ENCODE measurements at regions of chr11 and their contacts with region 1.

Region 1: GRCh38 chr11:118659314-118659952 is 20.0 kb downstream of the TREH start:
- DNase-seq: peak; percentile 80
- ATAC-seq: peak; percentile 100
- H3K4me3 Mint-ChIP-seq: no peak overlapping the region
- H3K27ac Mint-ChIP-seq: no peak overlapping the region
- H3K4me1 Mint-ChIP-seq: peaks cover 7% of the 10 kb centered on the region
- H3K27me3 Mint-ChIP-seq: peaks cover 6% of the 10 kb centered on the region
- CTCF ChIP-seq: peak; percentile 50

Region 2: DNA sequence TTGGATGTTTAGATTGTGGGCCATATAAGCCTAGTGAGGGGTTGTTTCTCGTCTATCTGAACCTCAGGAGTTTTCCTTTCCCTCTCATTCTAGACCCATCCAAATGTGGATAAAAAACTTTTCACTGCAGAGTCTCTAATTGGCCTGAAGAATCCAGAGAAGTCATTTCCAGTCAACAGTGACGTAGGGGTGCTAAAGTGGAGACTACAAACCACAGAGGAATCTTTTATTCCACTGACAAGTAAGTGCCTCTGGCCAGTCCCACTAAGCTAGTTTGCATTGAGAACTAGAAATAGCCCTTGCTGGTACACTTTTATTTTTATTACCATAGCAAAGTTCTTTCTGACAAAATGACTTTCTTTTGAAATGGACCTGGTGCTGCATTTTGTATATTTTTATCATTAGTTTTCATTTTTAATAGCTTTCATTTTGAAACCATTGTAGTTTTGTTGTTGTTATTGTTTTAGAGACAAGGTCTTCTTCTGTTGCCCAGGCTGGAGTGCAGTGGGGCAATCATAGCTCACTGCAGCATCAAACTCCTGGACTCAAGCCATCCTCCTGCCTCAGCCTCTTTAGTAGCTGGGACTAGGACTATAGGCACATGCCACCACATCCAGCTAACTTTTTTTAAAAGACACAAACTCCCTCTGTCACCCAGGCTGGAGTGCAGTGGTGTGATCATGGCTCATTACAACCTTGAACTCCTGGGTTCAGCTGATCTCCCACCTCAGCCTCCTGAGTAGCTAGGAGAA is 66.6 kb before region 1 on chr11:
- CTCF ChIA-PET with region 1: interaction called, 6 read pairs
- POLR2A ChIA-PET with region 1: no interaction called
- intact Hi-C with region 1: loop called (anchors 1 kb)
- DNase-seq: no peak
- ATAC-seq: no peak
- H3K4me3 Mint-ChIP-seq: no peak overlapping the region
- H3K27ac Mint-ChIP-seq: no peak overlapping the region
- H3K4me1 Mint-ChIP-seq: peaks cover 3% of the 10 kb centered on the region
- H3K27me3 Mint-ChIP-seq: no peaks in the 10 kb centered on the region
- CTCF ChIP-seq: no peak